Panc1 (cell line): ENCODE measurements at regions of chr2 and their contacts with region 1.

Region 1: DNA sequence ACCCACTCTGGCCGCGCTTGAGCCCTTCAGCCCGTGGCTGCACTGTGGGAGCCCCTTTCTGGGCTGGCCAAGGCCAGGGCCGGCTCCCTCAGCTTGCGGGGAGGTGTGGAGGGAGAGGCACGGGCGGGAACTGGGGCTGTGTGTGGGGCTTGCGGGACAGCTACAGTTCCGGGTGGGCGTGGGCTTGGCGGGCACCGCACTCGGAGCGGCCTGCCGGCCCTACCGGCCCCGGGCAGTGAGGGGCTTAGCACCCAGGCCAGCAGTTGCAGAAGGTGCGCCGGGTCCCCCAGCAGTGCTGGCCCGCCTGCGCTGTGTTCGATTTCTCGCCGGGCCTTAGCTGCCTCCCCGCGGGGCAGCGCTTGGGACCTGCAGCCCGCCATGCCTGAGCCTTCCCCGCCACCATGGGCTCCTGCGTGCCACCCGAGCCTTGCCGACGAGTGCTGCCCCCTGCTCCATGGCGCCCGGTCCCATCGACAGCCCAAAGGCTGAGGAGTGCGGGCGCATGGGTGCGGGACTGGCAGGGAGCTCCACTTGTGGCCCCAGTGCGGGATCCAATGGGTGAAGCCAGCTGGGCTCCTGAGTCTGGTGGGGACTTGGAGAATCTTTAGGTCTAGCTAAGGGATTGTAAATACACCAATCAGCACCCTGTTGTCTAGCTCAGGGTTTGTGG is 173.7 kb upstream of the FIGN start:
- DNase-seq: no peak
- ATAC-seq: no peak
- H3K4me3 ChIP-seq: no peak overlapping the region
- H3K27ac ChIP-seq: no peak overlapping the region
- H3K4me1 ChIP-seq: no peaks in the 10 kb centered on the region
- H3K27me3 ChIP-seq: no peaks in the 10 kb centered on the region
- CTCF ChIP-seq: no peak

Region 2: DNA sequence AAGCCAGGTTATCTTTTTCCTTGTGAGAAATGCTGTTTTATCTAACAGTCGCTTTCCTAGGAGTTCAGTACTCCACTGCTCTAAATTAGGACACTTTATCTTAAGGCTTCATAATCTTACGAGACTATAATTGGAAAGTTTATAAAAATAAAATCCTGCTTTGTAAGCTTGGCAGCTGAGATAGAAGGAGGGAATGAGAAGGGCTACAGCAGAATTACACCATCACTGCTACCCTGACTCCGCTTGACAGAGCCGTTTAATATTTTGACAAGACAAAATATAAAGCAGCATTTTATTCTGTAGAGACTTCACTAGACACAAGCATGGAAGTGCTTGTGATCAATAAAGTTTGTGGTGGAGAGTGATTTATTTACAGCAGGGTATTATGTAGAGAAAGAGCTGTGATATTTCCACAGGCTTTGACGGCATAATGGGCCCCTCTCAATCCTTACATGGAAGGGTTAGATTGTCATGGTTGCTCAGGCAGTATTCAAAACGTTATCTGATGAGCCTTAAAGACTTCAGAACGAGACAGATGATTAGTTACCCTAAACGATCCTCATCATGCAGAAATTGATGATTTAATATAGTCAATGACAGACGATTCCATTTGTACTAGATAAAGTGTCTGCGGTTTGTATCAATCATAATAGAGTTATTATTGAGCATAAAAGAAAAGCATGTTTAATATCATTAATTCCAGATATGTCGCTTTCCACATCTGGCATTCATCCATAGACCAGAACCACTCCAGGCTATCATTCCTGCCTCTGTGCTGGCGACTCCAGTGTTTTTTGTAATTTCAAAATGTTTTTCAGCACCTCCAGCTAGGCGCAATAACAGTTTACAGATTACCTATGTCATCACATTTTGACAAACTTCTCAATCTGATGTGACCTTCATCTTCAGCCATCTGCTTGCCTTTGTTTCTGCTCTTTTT is 415.9 kb before region 1 on chr2:
- CTCF ChIA-PET with region 1: no interaction called
- POLR2A ChIA-PET with region 1: no interaction called
- in situ Hi-C with region 1: no loop called
- intact Hi-C with region 1: no loop called
- DNase-seq: no peak
- ATAC-seq: no peak
- H3K4me3 ChIP-seq: no peak overlapping the region
- H3K27ac ChIP-seq: no peak overlapping the region
- H3K4me1 ChIP-seq: no peaks in the 10 kb centered on the region
- H3K27me3 ChIP-seq: no peaks in the 10 kb centered on the region
- CTCF ChIP-seq: no peak

Region 3: DNA sequence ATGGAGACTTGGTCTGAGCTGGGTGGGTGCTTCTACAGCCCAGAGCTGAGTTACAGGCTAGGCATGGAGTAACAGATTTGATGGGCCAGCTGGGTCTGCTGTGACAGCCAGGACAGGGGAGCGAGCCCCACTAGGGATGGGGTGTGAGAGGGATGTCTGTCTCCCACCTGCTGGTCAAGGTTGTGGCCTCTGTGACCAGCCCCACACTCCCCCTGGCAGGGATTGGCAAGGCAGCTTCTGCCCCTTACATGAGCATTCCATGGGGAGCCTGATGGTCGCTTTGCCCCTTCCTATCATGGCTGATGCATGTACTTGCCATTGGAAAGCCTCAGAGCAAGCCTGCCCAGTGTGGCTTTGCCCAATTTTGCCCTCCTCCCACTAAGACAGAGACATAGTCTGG is 11.7 kb before region 1 on chr2:
- CTCF ChIA-PET with region 1: no interaction called
- POLR2A ChIA-PET with region 1: interaction called, 13 read pairs
- in situ Hi-C with region 1: no loop called
- intact Hi-C with region 1: no loop called
- DNase-seq: no peak
- ATAC-seq: no peak
- H3K4me3 ChIP-seq: no peak overlapping the region
- H3K27ac ChIP-seq: no peak overlapping the region
- H3K4me1 ChIP-seq: no peaks in the 10 kb centered on the region
- H3K27me3 ChIP-seq: no peaks in the 10 kb centered on the region
- CTCF ChIP-seq: no peak

Region 4: DNA sequence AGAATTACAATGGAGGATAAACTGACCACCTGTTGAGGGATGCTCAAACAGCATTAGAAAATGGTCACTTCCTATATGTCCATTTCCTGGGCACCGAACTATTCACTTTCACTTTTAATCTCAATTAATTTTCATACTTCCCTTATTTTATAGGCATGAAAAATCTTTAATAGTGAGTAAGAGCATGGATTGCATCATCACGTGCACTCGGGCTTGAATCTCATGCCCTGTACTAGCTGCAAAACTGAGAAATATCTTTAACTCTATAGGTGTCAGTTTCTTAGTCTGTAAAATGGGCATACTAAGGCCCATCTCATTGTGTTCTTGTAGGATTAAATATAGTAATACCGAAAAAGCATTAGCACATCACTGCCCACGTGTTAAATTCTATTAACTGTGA is 10.2 kb after region 1 on chr2:
- CTCF ChIA-PET with region 1: no interaction called
- POLR2A ChIA-PET with region 1: no interaction called
- in situ Hi-C with region 1: no loop called
- intact Hi-C with region 1: loop called (anchors 1 kb)
- DNase-seq: no peak
- ATAC-seq: no peak
- H3K4me3 ChIP-seq: no peak overlapping the region
- H3K27ac ChIP-seq: no peak overlapping the region
- H3K4me1 ChIP-seq: no peaks in the 10 kb centered on the region
- H3K27me3 ChIP-seq: no peaks in the 10 kb centered on the region
- CTCF ChIP-seq: no peak